ENCODE measurements at regions of chr5 and their contacts with region 1.

Region 1: DNA sequence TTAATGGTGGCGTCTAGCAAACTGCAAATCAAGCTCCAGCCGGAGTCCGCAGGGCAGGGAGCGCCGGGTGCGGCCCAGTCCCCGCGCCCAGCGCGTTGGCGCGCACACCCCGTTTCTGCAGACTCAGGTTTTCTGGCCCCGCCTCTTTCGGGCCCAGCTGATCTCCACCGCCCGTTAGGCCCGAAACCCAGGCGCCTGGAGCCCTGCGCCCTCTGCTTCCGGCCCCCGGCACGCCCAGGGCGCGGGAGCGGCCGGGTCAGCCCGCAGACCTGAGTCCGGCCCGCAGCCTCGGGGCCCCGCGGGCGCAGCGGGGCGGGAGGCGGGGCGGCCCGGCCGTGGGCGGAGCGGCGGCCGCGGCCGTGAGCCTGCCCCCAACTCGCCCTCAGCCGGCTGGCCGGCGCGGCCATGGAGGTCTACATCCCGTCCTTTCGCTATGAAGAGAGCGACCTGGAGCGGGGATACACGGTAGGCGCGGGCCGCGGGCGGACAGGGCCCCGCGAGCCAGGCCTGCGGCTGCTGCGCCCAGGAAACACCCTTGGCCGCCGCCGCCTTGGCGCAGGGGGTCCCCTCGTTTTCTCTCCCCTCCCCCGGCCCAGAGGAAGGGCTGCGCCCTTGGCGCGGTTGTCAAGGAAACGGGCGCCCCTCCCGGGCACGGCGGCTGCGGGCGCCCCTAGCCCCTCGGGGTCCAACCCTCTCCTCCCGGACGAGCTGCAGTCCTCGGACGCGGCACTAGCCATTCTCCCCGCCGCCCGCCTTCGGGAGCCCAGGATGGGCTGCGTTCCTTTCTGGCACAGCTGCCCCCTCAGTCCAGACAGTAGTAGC is at the start of gene SNX24:
- DNase-seq: peak; percentile 87
- ATAC-seq: peak; percentile 94 to 96
- total RNA-seq, gene SNX24: 11.1 to 15.1 TPM

Region 2: DNA sequence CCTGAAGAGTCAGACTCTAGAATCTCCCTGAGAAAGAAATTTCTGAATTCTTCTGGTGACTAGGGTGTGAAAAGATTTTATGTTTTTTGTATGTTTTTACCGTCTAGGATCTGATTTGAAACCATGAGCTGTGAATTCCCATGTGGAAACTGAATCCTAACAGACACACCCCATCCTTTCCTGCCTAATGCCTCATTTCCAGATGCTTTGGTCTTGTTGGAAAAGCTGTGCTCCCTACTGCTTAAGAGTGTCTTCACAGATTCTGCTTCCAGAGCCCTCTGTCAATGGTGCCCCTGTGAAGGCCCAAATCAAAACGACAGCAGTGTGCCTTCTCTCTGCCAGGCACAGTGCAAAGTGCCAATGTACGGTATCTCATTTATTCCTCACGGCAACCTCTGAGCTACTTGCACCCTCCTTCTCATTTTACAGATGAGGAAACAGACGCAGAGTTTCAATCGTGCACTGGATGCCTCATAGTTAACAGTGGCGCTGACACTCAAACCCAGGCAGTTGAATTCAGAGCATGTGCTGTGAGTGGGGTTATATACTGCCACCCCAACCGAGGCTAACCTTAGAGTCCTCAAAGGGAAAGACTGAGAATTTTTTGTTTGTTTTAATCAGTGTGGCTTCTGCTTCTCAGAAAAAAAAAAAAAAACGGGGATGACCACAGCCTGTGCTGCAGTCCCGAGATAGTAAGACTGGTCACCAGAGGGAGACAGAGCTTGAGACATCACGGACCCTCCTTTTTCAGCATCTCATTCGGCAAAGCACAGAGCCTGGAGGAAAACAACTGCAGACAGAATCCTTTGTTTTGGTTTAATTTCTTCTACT is 345.0 kb before region 1 on chr5:
- intact Hi-C with region 1: loop called in 1 of 2 experiments (anchors 5 kb)
- DNase-seq: no peak
- ATAC-seq: peak; percentile 84 to 85

Region 3: DNA sequence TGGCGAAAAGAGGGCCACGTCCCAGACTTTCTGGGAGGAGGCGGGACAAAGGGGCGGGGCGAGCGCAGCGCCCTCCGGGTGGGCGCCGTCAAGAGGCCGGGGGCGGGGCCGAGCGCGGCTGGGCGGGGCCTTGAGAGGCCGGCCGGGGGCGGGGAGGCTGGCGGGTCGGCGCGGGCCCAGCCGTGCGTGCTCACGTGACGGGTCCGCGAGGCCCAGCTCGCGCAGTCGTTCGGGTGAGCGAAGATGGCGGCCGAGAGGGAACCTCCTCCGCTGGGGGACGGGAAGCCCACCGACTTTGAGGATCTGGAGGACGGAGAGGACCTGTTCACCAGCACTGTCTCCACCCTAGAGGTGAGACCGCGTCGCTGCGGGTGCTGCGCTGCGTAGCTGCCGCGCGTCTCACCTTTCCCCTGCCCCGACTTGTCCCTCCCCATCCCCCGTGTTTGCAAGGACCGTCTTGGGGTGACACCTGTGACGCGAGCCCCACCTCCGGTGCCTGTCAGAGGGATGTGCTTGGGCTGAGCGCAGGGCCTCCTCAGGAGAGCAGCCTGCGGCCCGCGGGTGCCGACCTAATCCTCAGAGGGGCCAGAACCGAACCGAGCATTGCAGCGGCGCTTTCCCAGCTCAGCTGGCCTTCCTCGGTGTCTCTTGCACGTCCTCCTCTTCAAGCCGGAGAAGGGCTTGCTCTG is 70.4 kb before region 1 on chr5 and contains the start of gene SNX2:
- intact Hi-C with region 1: loop called in 1 of 2 experiments (anchors 10 kb)
- DNase-seq: peak; percentile 96
- ATAC-seq: peak; percentile 99
- total RNA-seq, gene SNX2: 37.3 to 52.6 TPM